CD4-positive, alpha-beta memory T cell (primary cell): ENCODE measurements at regions of chr16 and their contacts with region 1.

Region 1: GRCh38 chr16:68417711-68418301 is 30.5 kb downstream of the SMPD3 start:
- DNase-seq: peak; percentile 82 to 90 (median 87)
- H3K4me3 ChIP-seq: peak overlapping the region; percentile 8 to 25
- H3K4me3 Mint-ChIP-seq: peak overlapping the region; percentile 75 to 88 (median 85)
- H3K27ac ChIP-seq: peak overlapping the region; percentile 45
- H3K27ac Mint-ChIP-seq: peak overlapping the region; percentile 90 to 99 (median 95)
- H3K4me1 ChIP-seq: peaks cover 65% of the 10 kb centered on the region
- H3K4me1 Mint-ChIP-seq: peaks cover 45 to 84% (median 67%) of the 10 kb centered on the region in 4 donors
- H3K27me3 ChIP-seq: no peaks in the 10 kb centered on the region
- H3K27me3 Mint-ChIP-seq: no peaks in the 10 kb centered on the region

Region 2: GRCh38 chr16:68406451-68407152 is 11.2 kb before region 1 on chr16:
- CTCF ChIA-PET with region 1: interaction called, 12 read pairs
- POLR2A ChIA-PET with region 1: interaction called, 20 read pairs
- intact Hi-C with region 1: no loop called
- DNase-seq: no peak
- H3K4me3 ChIP-seq: no peak overlapping the region
- H3K4me3 Mint-ChIP-seq: no peak overlapping the region
- H3K27ac ChIP-seq: no peak overlapping the region
- H3K27ac Mint-ChIP-seq: no peak overlapping the region
- H3K4me1 ChIP-seq: peaks cover 3% of the 10 kb centered on the region
- H3K4me1 Mint-ChIP-seq: peaks cover 4 to 19% (median 10%) of the 10 kb centered on the region in 4 donors
- H3K27me3 ChIP-seq: no peaks in the 10 kb centered on the region
- H3K27me3 Mint-ChIP-seq: peaks cover 1 to 5% of the 10 kb centered on the region in 2 donors

Region 3: DNA sequence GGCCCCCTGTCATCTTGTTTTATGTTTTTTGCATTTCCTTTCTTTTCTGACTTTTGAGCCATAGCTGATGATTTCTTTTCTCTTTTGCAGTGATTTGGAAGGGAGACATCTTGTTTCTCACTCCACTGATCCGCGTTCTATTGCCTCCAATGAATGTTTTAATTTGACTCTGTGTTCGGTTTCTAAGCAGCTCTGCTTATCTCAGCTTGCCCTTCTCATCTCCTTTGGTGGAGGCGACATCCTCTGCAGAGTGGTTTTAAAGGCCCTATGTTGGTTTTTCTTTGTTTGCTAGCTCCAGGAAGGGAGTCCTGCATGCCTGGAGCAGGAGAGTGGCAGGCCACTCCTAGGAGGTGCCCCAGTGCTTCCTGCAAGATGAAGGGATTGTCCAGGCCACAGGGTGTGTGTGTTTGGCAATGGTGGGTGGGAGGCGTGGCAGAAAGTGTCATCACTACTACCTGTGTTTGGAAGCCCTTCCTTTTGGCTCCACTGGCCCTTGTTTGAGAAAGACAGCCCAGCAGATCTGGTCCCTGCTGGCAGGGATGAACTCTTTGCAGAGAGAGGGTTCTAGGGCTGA is 16.9 kb after region 1 on chr16:
- CTCF ChIA-PET with region 1: interaction called, 5 read pairs
- POLR2A ChIA-PET with region 1: interaction called, 15 read pairs
- intact Hi-C with region 1: no loop called
- DNase-seq: no peak
- H3K4me3 ChIP-seq: no peak overlapping the region
- H3K4me3 Mint-ChIP-seq: peak overlapping the region in 1 of 8 donors; percentile 61
- H3K27ac ChIP-seq: no peak overlapping the region
- H3K27ac Mint-ChIP-seq: peak overlapping the region in 5 of 7 donors; percentile 20 to 55 (median 53)
- H3K4me1 ChIP-seq: peaks cover 12% of the 10 kb centered on the region
- H3K4me1 Mint-ChIP-seq: peaks cover 7 to 11% (median 9%) of the 10 kb centered on the region in 4 donors
- H3K27me3 ChIP-seq: no peaks in the 10 kb centered on the region
- H3K27me3 Mint-ChIP-seq: peaks cover 0 to 2% of the 10 kb centered on the region in 2 donors

Region 4: GRCh38 chr16:68448360-68448970 is 30.7 kb after region 1 on chr16 and contains the start of gene SMPD3:
- CTCF ChIA-PET with region 1: interaction called, 18 read pairs
- POLR2A ChIA-PET with region 1: interaction called, 35 read pairs
- intact Hi-C with region 1: loop called (anchors 1 kb)
- DNase-seq: peak; percentile 97 to 99 (median 98)
- H3K4me3 ChIP-seq: peak within 1 kb of the TSS; percentile 47 to 61
- H3K4me3 Mint-ChIP-seq: peak within 1 kb of the TSS; percentile 70 to 89 (median 78)
- H3K27ac ChIP-seq: no peak within 1 kb of the TSS
- H3K27ac Mint-ChIP-seq: peak within 1 kb of the TSS in 6 of 7 donors; percentile 43 to 88 (median 65)
- H3K4me1 ChIP-seq: peaks cover 36% of the 10 kb centered on the region
- H3K4me1 Mint-ChIP-seq: peaks cover 15 to 34% (median 22%) of the 10 kb centered on the region in 4 donors
- H3K27me3 ChIP-seq: peaks cover 8% of the 10 kb centered on the region
- H3K27me3 Mint-ChIP-seq: peaks cover 12 to 14% of the 10 kb centered on the region in 2 donors
- total RNA-seq, gene SMPD3: 0.75 to 3.1 TPM

Region 5: DNA sequence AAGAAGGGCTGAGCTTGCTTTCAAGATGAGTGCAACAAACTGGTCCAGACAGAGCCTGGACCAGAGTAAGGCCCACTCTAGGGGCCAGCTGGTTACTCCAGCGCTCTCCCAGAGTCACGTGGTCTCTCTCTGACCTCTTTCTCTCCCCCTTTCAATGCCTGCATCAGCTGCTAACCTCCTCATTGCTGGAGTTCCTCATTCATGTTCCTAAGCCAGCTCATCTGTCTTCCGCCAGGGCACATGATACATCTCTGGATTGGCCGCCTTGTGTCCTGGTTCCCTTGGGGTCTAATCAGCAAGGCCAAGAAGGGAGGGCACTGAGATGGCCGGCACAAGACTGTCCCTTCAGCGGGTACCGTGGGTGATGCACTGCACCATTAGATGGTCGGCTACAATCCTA is 94.4 kb after region 1 on chr16:
- CTCF ChIA-PET with region 1: interaction called, 26 read pairs
- POLR2A ChIA-PET with region 1: interaction called, 5 read pairs
- intact Hi-C with region 1: loop called (anchors 5 kb)
- DNase-seq: no peak
- H3K4me3 ChIP-seq: no peak overlapping the region
- H3K4me3 Mint-ChIP-seq: no peak overlapping the region
- H3K27ac ChIP-seq: no peak overlapping the region
- H3K27ac Mint-ChIP-seq: peak overlapping the region in 3 of 7 donors; percentile 27 to 72 (median 64)
- H3K4me1 ChIP-seq: peaks cover 7% of the 10 kb centered on the region
- H3K4me1 Mint-ChIP-seq: peaks cover 0 to 4% (median 2%) of the 10 kb centered on the region in 4 donors
- H3K27me3 ChIP-seq: no peaks in the 10 kb centered on the region
- H3K27me3 Mint-ChIP-seq: no peaks in the 10 kb centered on the region